Activated CD4-positive, alpha-beta memory T cell treated with anti-CD3 and anti-CD28 coated beads for 36 hours (primary cell): ENCODE measurements at regions of chr17 and their contacts with region 1.

Region 1: DNA sequence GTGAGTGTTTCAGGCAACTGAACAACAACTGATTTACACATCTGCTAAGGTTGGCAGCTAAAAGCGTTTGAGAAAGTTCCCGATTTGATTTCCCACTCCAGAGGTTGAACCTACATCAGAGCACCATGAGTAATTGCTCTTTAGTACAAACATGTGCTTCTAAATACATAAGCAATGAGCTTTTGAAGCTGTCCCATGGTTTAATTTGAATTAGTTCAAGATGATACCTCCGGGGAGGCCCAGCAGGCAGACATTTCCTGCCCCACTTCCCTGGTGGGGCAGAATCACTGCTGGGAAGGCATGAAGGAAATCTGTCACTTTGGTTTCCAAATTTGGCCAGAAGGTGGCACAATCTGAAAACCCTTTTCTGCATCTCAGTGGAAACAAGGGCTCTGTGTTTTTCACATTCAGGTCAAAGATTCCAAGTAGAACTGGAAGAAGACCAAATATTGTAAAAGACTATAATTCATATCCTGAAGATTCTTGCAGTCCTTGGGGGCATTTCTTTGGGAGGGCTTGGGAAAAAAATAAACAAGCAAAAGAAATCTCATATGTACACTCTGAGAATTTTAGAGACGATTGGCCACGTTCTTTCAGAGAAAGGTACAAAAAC is 176.2 kb upstream of the FAM20A start:
- DNase-seq: peak; percentile 13
- H3K4me3 Mint-ChIP-seq: no peak overlapping the region
- H3K27ac Mint-ChIP-seq: no peak overlapping the region
- H3K4me1 Mint-ChIP-seq: no peaks in the 10 kb centered on the region
- H3K27me3 Mint-ChIP-seq: peaks cover 7% of the 10 kb centered on the region

Region 2: DNA sequence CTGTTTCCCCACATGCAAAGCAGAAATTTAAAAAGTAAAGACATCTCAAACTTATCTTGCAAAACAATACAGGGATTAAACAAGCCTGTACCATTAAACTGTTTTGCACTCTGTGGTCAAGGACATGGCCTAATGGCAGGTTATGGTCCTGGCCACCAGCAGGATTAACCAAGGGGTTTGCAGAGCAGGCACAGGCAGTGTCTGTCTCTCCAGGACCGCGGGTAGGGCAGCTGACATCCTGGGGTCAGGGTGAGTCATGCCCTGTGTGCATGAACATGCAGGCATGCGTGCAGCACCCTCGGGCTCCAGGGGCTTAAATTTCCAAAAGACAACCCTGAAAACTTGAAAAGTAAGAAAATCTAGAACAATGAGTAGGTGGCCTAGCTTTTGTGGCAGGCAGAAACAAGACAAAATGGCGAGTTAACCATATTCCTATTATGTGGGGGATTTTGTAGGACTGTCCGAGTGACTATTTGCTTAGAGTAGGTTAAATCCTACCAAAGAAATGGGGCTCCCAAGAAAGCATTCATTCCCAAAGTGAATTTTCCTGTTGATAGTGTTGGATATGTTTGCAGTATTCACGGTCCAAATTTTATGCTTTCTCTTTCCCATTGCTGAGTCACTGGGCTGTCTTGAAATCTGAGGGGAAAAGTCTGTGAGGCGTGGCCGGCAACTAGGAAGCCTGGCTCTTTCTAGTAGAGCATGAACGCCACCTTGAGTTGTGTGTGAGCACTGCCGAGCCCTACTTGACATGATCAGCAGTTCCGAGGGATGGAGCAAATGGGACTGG is 17.8 kb before region 1 on chr17:
- CTCF ChIA-PET with region 1: no interaction called
- POLR2A ChIA-PET with region 1: no interaction called
- intact Hi-C with region 1: no loop called
- DNase-seq: peak; percentile 79
- H3K4me3 Mint-ChIP-seq: peak overlapping the region; percentile 50
- H3K27ac Mint-ChIP-seq: no peak overlapping the region
- H3K4me1 Mint-ChIP-seq: peaks cover 8% of the 10 kb centered on the region
- H3K27me3 Mint-ChIP-seq: peaks cover 2% of the 10 kb centered on the region

Region 3: GRCh38 chr17:68861602-68862001 is 84.3 kb after region 1 on chr17:
- CTCF ChIA-PET with region 1: no interaction called
- POLR2A ChIA-PET with region 1: no interaction called
- intact Hi-C with region 1: no loop called
- DNase-seq: no peak
- H3K4me3 Mint-ChIP-seq: no peak overlapping the region
- H3K27ac Mint-ChIP-seq: no peak overlapping the region
- H3K4me1 Mint-ChIP-seq: no peaks in the 10 kb centered on the region
- H3K27me3 Mint-ChIP-seq: peaks cover 8% of the 10 kb centered on the region

Region 4: DNA sequence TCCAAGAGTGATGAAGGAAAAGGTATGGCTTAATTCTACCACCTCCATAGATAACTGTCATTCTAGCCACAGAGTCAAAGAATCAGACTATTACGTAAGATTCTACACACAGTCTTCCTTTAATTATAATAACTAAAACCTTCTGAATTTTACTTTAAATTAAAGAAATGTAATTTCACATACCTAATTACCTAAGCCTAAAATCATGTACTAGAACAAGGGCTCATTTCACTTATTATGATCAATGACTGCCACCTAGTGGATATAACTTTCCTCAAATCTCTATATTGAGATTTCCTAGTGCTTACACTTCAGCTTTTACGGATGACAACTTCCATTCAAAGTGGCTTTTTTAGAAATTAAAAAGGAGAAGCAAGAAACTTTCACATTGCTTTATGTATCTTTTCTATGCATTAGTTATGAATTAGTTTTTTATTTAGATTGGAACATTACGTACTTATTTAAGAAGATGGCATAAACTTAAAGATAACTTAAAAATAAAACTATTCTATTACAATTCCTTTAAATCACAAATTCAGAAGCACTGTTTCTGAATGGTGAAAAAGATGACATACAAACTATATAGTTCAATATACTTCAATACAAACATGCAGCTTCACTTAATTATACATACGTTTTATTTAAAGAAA is 469.5 kb after region 1 on chr17:
- CTCF ChIA-PET with region 1: interaction called, 29 read pairs
- POLR2A ChIA-PET with region 1: no interaction called
- intact Hi-C with region 1: loop called (anchors 1 kb)
- DNase-seq: no peak
- H3K4me3 Mint-ChIP-seq: no peak overlapping the region
- H3K27ac Mint-ChIP-seq: no peak overlapping the region
- H3K4me1 Mint-ChIP-seq: no peaks in the 10 kb centered on the region
- H3K27me3 Mint-ChIP-seq: no peaks in the 10 kb centered on the region

Region 5: DNA sequence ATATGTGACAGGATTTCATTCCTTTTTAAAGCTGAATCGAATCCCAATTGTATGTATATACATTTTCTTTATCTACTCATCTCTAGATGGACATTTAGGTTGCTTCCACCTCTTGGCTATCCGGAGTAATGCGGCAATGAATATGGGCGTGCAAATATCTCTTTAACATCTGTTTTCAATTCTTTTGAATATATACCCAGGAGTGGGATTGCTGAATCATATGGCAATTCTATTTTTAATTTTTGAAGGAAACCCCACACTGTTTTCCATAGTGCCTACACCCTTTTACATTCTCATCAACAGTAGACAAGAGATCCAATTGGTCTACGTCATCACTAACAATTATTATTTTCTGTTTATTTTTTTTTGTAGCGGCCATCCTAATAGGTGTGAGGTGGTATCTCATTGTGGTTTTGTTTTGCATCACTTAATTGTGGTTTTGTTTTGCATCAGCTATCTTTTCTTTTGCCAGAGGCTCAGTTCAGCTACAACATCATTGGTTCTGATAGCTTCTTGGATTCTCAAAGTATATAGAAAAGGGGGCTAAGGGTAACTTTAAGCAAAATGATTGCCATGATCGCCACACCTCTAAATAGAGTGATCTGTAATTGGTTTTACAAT is 611.6 kb after region 1 on chr17:
- CTCF ChIA-PET with region 1: no interaction called
- POLR2A ChIA-PET with region 1: no interaction called
- intact Hi-C with region 1: loop called (anchors 5 kb)
- DNase-seq: no peak
- H3K4me3 Mint-ChIP-seq: no peak overlapping the region
- H3K27ac Mint-ChIP-seq: no peak overlapping the region
- H3K4me1 Mint-ChIP-seq: no peaks in the 10 kb centered on the region
- H3K27me3 Mint-ChIP-seq: peaks cover 11% of the 10 kb centered on the region